ENCODE measurements at regions of chr1 and their contacts with region 1.

Region 1: DNA sequence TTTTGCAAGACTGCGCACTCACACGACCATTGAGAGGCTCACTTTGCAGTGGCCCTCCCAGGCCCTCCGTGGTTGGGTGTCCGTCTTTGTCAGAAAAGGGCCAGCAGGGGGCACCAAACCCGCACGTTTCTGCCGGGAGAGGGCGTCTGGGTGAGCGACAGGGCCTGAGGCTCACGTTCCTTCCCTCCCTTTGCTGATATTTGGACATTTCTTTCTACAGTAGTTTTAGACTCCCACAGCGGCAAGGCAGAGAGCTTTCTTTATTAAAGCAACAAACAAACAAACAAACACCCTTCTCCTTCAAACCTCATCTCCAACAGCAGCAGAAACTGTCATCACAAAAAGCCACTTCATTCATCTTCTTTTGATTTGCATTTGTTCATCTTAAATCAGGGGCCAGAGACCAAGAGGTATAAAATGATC is 79.2 kb upstream of the WDR26 start:
- DNase-seq: peak; percentile 74 to 93 (median 85)
- ATAC-seq: peak; percentile 98
- H3K4me3 ChIP-seq: no peak overlapping the region
- H3K27ac ChIP-seq: no peak overlapping the region
- H3K4me1 ChIP-seq: no peaks in the 10 kb centered on the region
- H3K27me3 ChIP-seq: no peaks in the 10 kb centered on the region
- CTCF ChIP-seq: peak; percentile 91 to 92

Region 2: GRCh38 chr1:224472806-224473205 is 41.0 kb before region 1 on chr1:
- intact Hi-C with region 1: no loop called
- DNase-seq: no peak
- ATAC-seq: no peak
- H3K4me3 ChIP-seq: no peak overlapping the region
- H3K27ac ChIP-seq: no peak overlapping the region
- H3K4me1 ChIP-seq: no peaks in the 10 kb centered on the region
- H3K27me3 ChIP-seq: no peaks in the 10 kb centered on the region
- CTCF ChIP-seq: no peak

Region 3: DNA sequence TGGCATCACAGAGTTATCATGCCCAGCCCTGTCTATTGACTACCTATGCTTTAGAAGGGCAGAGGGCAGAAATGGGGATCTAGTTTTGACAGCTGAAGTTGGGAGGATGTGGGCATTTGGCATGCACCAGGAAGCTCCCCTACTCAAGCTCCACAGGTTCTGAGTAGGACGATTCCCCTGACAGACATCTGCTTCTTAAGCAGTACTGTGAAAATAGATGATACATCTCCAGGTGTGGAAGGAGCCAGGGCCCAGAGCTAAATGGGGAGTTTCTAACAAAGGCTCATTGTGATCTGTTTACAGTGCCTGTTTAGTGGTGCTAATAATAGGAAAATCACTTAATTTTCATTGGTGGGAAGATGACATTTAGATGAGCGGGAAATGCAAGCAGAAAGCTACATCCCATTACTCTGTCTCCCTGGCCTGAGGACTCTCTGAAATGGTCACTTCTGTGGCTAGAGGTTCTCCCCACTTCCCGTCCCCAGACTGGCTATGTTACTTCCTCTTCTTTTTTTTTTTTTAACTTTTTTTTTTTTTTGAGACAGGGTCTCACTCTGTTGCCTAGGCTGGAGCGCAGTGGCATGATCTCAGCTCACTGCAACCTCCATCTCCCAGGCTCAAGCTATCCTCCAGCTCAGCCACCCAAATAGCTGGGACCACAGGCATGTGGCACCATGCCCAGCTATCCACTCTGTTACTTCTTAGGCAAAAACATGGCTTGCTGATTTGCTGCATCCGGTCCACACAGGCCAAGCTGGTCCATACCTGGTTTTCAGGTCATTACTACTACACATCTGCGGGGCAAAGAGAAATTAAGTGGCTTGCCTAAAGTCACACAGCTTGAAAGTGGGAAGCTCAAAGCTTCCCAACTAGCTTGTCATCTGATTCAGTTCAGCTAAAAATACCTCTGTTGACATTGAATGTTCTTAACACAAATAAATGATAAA is 79.1 kb after region 1 on chr1:
- intact Hi-C with region 1: no loop called
- DNase-seq: no peak
- ATAC-seq: peak; percentile 45
- H3K4me3 ChIP-seq: no peak overlapping the region
- H3K27ac ChIP-seq: no peak overlapping the region
- H3K4me1 ChIP-seq: no peaks in the 10 kb centered on the region
- H3K27me3 ChIP-seq: no peaks in the 10 kb centered on the region
- CTCF ChIP-seq: no peak

Region 4: GRCh38 chr1:224644553-224645154 is 130.9 kb after region 1 on chr1:
- intact Hi-C with region 1: loop called in 1 of 2 experiments (anchors 10 kb)
- DNase-seq: peak in 1 of 4 donors; percentile 43
- ATAC-seq: peak; percentile 87
- H3K4me3 ChIP-seq: no peak overlapping the region
- H3K27ac ChIP-seq: no peak overlapping the region
- H3K4me1 ChIP-seq: no peaks in the 10 kb centered on the region
- H3K27me3 ChIP-seq: no peaks in the 10 kb centered on the region
- CTCF ChIP-seq: peak; percentile 73 to 88

Region 5: DNA sequence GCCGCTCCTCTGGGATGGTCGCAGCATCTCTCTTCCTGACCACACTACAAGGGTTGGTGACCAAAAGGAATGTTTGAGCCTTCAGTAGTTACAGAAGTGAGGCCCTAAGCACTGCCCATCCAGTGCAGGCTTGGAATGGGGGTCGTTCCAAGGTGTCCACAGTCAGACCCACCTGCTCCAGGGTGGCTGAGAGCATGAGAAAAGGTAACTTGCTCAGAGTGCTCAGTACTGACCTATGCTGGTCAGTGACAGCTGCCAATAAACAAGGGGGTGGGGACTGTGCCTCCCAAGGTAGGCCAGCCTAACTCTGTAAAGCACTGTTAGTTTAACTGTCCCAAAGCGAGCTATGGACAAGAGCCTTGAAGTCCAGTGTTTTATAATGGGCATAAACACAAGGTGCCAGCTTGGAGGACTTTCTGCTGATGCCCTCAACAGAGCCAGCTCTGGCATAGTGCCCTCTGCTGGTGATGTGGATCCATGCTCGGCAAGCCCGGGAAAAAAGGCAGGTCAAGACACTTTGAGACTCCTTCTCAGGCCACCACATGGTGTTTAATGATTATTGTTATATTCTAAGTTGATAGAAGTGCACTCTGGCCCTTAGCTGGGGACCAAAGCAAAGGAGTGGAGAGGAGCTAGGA is 337.5 kb after region 1 on chr1:
- intact Hi-C with region 1: loop called in 1 of 2 experiments (anchors 5 kb)
- DNase-seq: peak in 3 of 4 donors; percentile 21 to 70 (median 52)
- ATAC-seq: peak; percentile 91
- H3K4me3 ChIP-seq: no peak overlapping the region
- H3K27ac ChIP-seq: no peak overlapping the region
- H3K4me1 ChIP-seq: no peaks in the 10 kb centered on the region
- H3K27me3 ChIP-seq: no peaks in the 10 kb centered on the region
- CTCF ChIP-seq: peak; percentile 55 to 63